ENCODE measurements at regions of chr13 and their contacts with region 1.

Region 1: DNA sequence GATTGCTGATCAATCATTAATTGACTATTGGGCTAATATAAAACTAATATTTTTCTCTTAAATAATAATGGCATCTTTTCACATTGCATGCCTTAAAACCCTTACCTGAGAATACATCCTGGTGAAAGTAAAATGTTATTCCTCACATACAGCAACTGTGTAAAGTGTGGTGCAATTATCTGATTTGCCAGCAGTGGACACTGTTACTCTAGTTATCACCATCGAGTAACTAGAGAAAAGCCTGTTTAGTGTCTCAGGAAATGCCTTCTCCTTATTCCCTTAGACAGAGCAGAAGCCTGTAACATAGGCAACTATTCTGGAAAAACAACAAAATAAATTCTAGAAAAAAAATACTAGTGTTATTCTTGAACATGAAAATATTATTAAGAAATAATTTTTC is 459.8 kb downstream of the FGF14 start:
- DNase-seq: peak; percentile 34
- H3K4me3 ChIP-seq: peak overlapping the region in 1 of 2 experiments; percentile 42; a peak in 1 of 4 replicates
- H3K27ac ChIP-seq: peak overlapping the region in 1 of 2 experiments; percentile 94; a peak in 2 of 4 replicates
- H3K4me1 ChIP-seq: peaks cover 0 to 21% of the 10 kb centered on the region in 2 experiments; a peak in 2 of 4 replicates
- H3K27me3 ChIP-seq: no peaks in the 10 kb centered on the region
- CTCF ChIP-seq: peak; percentile 84
- EP300 ChIP-seq: no peak
- RAD21 ChIP-seq: peak; percentile 96

Region 2: GRCh38 chr13:101795025-101795424 is 147.0 kb before region 1 on chr13:
- CTCF ChIA-PET with region 1: no interaction called
- POLR2A ChIA-PET with region 1: no interaction called
- DNase-seq: no peak
- H3K4me3 ChIP-seq: no peak overlapping the region
- H3K27ac ChIP-seq: no peak overlapping the region
- H3K4me1 ChIP-seq: no peaks in the 10 kb centered on the region; a peak in 1 of 4 replicates
- H3K27me3 ChIP-seq: no peaks in the 10 kb centered on the region
- CTCF ChIP-seq: no peak
- EP300 ChIP-seq: no peak
- RAD21 ChIP-seq: no peak

Region 3: GRCh38 chr13:101869553-101869952 is 72.5 kb before region 1 on chr13:
- CTCF ChIA-PET with region 1: no interaction called
- POLR2A ChIA-PET with region 1: no interaction called
- DNase-seq: no peak
- H3K4me3 ChIP-seq: no peak overlapping the region
- H3K27ac ChIP-seq: no peak overlapping the region
- H3K4me1 ChIP-seq: no peaks in the 10 kb centered on the region; a peak in 2 of 4 replicates
- H3K27me3 ChIP-seq: no peaks in the 10 kb centered on the region
- CTCF ChIP-seq: no peak
- EP300 ChIP-seq: no peak
- RAD21 ChIP-seq: no peak

Region 4: DNA sequence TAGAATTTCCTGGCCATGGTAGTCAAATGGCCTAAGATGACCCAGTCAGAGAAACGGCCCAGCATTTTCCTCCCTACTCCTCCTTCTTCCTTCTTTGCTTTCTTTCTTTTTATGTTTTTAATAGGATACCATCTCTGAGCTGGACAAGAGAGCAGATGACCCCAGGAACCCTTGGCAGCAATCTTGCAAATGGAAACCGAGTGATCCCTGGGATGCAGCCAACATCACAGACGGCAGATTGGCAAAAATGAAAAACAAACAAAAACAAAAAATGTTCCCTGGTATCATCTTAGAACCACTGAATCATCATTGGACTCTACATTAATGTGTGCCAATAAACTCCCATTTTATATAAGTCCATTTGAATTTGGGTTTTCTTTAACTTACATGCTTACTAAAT is 35.4 kb after region 1 on chr13:
- CTCF ChIA-PET with region 1: interaction called, 24 read pairs
- POLR2A ChIA-PET with region 1: interaction called, 3 read pairs
- DNase-seq: peak; percentile 9
- H3K4me3 ChIP-seq: no peak overlapping the region; a peak in 1 of 4 replicates
- H3K27ac ChIP-seq: peak overlapping the region; percentile 29 to 90; a peak in 3 of 4 replicates
- H3K4me1 ChIP-seq: peaks cover 0 to 44% of the 10 kb centered on the region in 2 experiments; a peak in 2 of 4 replicates
- H3K27me3 ChIP-seq: no peaks in the 10 kb centered on the region
- CTCF ChIP-seq: no peak
- EP300 ChIP-seq: 0 out of 4 replicates have a peak, but pooled peaks of 1 of the 2 experiments have one; percentile 47
- RAD21 ChIP-seq: no peak

Region 5: DNA sequence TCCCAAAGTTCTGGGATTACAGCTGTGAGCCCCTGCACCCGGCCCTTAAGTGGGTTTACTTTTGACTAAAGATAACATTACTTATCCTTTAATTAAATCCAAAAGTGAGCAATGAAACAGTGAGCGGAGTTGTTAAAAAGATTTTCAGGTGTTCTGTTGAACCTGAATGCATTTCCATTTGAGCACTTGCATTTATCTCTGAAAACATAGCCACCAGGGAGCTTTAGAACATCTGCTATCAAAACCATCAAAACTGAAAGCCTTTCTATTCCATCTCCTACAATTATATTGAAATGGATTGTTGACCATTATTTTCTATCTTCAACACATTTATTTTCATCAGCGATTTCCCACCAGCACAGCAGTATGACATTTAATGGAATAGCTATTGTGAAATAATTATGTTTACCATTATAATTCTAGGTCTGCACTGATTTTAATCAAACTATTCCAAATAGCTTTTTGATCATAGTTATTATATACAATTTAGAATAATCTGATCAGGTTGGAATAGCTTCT is 190.8 kb after region 1 on chr13:
- CTCF ChIA-PET with region 1: interaction called, 19 read pairs
- POLR2A ChIA-PET with region 1: no interaction called
- DNase-seq: no peak
- H3K4me3 ChIP-seq: no peak overlapping the region
- H3K27ac ChIP-seq: peak overlapping the region in 1 of 2 experiments; percentile 80; a peak in 2 of 4 replicates
- H3K4me1 ChIP-seq: peaks cover 19 to 24% of the 10 kb centered on the region in 2 experiments; a peak in 3 of 4 replicates
- H3K27me3 ChIP-seq: no peaks in the 10 kb centered on the region
- CTCF ChIP-seq: no peak
- EP300 ChIP-seq: peak in 1 of 2 experiments; percentile 75; a peak in 2 of 4 replicates
- RAD21 ChIP-seq: no peak

Region 6: DNA sequence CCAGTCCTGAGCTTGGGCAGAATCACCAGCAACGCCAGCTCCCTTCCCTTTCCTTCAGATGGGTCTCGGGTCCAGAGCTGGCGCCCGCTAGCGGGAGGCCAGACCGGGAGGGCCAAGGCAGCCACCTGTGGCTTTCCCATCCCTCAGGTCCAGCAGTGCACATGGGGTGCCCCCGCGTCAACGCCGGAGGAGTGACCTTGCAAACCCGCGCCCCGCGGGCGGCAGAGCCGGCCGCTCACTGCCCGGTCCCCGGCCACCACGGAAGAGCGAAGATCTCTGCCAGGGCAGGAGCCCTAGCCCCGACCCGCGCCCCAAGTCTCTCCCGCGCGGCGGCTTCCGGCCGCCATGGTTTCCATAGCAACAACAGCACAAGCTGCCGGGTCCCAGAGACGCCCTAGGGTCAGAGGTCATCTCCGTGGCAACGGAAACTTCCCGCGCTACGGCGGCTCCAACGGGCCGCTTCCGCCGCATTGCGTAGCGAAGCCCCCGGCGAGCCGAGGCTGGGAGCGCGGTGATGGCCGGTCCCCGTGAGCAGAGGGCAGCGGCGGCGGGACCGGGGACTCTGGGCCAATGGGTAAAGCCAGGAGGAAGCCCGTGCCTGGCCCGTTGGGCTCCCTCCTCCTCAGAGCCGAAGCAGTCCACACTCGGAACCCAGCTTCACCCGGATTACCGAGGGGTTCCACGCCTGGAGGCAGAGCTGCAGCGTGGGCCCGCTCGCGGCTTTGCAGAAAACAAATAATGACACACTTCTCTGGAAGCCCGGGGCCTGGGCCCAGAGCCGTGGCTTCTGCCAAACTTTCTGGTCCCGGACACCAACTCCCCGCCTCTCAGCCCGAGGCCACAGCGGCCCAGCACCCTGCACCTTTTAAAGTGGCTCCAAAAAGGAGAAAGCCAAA is 452.4 kb after region 1 on chr13:
- CTCF ChIA-PET with region 1: interaction called, 22 read pairs
- POLR2A ChIA-PET with region 1: no interaction called
- DNase-seq: peak; percentile 95
- H3K4me3 ChIP-seq: peak overlapping the region; percentile 75 to 86
- H3K27ac ChIP-seq: peak overlapping the region; percentile 25 to 96; a peak in 3 of 4 replicates
- H3K4me1 ChIP-seq: peaks cover 0 to 41% of the 10 kb centered on the region in 2 experiments; a peak in 2 of 4 replicates
- H3K27me3 ChIP-seq: no peaks in the 10 kb centered on the region
- CTCF ChIP-seq: peak; percentile 46
- EP300 ChIP-seq: peak; percentile 3 to 24; a peak in 1 of 4 replicates
- RAD21 ChIP-seq: peak; percentile 64

Region 7: DNA sequence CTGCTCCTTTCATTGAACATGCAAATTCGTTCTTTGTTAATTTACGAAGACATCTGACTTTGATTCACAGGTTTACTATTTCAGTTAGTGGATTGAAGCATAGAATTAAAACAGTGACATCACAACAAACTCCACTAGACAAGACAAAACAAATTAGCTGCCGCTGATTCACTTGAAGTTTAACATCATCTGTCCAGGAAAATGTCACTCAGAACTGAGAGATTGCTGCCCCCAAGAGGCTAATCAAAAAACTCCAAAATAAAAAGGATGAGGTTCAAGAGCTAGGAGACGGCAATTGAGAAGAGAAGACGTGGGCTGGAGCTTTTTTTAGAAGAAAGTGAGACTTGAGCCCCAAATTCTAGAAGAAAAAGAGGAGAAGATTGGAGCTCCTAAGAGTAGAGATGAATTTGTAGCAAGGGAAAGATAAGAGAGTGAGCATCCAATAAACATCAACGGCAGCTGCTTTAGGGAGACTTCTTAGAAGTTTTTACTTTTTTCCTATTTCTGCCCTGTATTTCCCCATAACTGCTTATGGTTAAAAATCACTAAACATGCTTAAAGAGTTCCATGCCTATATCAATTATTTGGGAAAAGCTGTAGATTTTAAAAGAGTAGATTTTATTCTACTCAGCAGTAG is 614.0 kb after region 1 on chr13:
- CTCF ChIA-PET with region 1: interaction called, 29 read pairs
- POLR2A ChIA-PET with region 1: interaction called, 5 read pairs
- DNase-seq: peak; percentile 47
- H3K4me3 ChIP-seq: no peak overlapping the region
- H3K27ac ChIP-seq: peak overlapping the region in 1 of 2 experiments; percentile 55; a peak in 2 of 4 replicates
- H3K4me1 ChIP-seq: peaks cover 0 to 2% of the 10 kb centered on the region in 2 experiments; a peak in 2 of 4 replicates
- H3K27me3 ChIP-seq: no peaks in the 10 kb centered on the region
- CTCF ChIP-seq: peak; percentile 64
- EP300 ChIP-seq: no peak
- RAD21 ChIP-seq: peak; percentile 92

Measured in SK-N-SH (cell line).